AG04449 (cell line): ENCODE measurements at regions of chr17 and their contacts with region 1.

Region 1: DNA sequence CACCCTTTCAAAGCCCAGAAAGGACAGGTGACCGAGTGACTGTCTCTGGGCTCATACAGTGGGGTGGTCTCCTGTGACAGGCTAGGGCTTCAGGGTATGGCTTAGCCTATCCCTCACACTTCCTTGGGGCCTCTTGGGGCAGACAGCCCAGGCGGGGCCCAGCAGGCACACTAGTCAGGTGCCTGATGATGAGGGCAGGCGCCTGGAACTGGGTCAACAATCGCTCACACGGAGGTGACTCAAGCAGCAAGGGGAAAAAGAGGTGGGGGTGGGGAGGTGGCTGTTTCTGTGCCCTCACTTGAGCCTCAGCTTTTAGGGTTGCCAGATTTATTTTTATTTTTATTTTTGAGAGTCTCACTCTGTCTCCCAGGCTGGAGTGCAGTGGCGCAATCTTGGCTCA is 6.4 kb upstream of the GRN start:
- DNase-seq: no peak
- H3K4me3 ChIP-seq: no peak overlapping the region
- CTCF ChIP-seq: no peak

Region 2: DNA sequence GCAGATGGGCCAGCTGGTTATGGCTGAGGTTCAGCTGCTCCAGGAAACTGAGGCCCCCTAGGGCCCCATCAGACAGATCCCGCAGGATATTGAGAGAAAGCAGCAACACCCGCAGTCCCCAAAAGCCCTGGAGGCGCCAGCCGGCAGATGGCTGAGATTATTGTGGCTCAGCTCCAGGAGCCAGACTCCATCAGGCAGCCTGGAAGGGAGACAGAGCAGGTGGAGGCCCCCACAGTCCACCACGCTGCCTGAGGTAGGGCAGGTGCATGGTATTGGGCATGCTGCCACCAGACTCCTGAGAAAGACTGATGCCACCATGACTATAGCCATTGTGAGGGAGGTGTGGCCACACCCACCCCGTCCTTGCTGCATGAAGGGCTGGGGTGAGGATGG is 314.4 kb before region 1 on chr17:
- CTCF ChIA-PET with region 1: no interaction called
- POLR2A ChIA-PET with region 1: no interaction called
- DNase-seq: no peak
- H3K4me3 ChIP-seq: no peak overlapping the region
- CTCF ChIP-seq: no peak

Region 3: DNA sequence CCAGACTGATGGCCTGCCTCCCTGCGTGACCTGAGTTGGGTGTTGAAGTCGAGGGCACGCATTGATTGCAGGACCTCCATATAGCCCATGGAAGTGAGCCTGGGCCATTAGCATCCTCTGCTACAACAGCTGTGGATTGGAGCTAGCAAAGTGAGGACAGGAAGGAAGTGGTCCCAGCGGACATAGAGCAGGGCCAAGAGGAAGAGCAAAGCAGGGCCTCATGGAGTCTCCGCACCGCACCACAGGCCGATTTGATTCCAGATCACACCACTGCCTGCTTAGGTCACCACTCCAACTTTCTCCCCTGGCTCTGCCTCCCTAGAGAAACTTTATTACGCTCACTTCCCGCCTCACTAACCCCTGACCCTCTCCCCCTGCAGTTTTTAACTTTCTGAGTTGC is 108.6 kb before region 1 on chr17:
- CTCF ChIA-PET with region 1: no interaction called
- POLR2A ChIA-PET with region 1: no interaction called
- DNase-seq: no peak
- H3K4me3 ChIP-seq: no peak overlapping the region
- CTCF ChIP-seq: no peak

Region 4: DNA sequence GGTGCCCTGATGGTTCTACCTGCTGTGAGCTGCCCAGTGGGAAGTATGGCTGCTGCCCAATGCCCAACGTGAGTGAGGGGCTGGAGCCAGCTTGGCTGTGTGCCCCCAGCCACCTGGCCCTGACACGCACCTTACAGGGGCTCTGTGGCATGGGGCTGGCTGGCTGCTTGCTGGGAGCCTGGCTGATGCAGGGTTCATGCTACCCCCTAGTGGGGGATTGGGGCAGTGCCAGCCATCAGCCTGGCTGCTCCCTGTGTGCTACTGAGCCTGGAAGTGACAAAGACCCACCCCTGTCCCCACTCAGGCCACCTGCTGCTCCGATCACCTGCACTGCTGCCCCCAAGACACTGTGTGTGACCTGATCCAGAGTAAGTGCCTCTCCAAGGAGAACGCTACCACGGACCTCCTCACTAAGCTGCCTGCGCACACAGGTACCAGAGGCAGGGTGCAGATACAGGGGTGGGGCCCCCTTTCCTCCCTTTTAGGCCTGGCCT is 12.1 kb after region 1 on chr17:
- CTCF ChIA-PET with region 1: interaction called, 37 read pairs
- POLR2A ChIA-PET with region 1: no interaction called
- DNase-seq: no peak
- H3K4me3 ChIP-seq: no peak overlapping the region
- CTCF ChIP-seq: peak; percentile 87

Region 5: DNA sequence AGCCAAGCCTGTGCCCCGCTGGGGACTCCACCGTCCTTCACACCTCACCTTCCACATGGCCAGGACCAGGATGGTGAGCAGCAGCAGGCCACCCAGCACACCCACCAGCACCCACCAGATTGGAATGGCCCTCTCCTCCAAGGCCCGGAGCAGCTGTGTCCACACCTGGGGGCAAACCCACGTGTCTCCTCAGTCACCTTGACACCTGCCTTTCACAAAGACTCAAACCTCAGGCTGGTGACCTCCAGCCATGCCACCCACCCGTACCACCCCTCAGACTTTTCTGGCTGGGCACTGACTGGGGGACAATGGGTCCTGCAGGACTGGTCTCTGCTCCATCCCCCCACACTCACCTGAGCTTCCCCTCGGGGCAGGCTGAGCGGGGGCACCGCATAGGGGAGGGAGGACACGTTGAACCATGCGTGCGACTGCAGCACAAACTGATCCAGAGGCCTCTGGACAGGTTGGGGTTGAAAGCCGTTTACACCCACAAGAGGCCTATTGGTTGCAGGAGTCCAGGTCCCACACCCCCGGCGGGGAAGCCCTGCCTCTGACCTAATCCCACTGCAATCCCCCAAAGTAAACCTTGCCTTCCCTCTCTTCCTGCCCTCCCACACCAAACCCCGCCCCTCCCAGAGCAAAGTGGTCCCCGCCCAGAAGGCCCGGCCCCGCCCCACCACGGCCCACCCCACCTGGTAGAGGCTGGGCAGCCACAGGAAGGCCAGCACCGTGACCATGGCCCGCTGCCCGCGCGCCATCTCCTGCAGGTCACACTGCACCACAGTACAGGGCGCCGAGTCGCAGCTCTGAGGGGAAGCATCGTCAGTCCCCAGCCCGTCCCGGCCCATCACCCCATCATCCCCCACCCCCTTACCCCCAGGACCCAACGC is 35.8 kb after region 1 on chr17:
- CTCF ChIA-PET with region 1: no interaction called
- POLR2A ChIA-PET with region 1: no interaction called
- DNase-seq: no peak
- H3K4me3 ChIP-seq: no peak overlapping the region
- CTCF ChIP-seq: no peak

Region 6: GRCh38 chr17:44473367-44473766 is 134.7 kb after region 1 on chr17:
- CTCF ChIA-PET with region 1: no interaction called
- POLR2A ChIA-PET with region 1: no interaction called
- DNase-seq: no peak
- H3K4me3 ChIP-seq: no peak overlapping the region
- CTCF ChIP-seq: no peak